Activated CD4-positive, alpha-beta memory T cell treated with anti-CD3 and anti-CD28 coated beads for 36 hours (primary cell): ENCODE measurements at regions of chr7 and their contacts with region 1.

Region 1: DNA sequence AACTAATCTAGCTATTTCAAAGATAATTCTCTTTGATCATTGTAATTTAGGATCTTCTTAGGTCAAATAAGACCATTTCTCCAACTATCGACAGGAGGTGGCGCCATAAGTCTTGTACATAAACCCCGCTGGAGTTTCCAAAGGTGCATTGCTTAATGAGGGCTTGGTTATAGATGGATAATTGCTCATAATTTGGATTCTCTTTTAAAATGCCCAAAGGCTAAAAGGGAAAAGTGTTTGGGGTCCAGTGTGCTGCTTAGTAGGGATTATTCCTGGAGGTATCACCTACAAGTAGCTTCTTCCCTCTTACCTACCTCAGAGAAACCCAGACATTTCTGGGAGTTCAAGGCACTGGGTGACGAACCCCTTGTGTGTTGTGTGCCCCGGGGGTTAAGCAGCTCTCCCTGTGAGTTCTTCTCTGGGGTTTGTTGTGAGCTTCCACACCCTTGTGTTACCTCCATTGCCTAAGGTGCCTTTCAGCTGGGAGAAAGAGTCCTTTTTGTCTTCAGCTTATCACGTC is 75.2 kb downstream of the PAXIP1 start:
- DNase-seq: peak; percentile 83
- H3K4me3 Mint-ChIP-seq: peak overlapping the region; percentile 95
- H3K27ac Mint-ChIP-seq: peak overlapping the region; percentile 94
- H3K4me1 Mint-ChIP-seq: peaks cover 24% of the 10 kb centered on the region
- H3K27me3 Mint-ChIP-seq: no peaks in the 10 kb centered on the region

Region 2: GRCh38 chr7:154947604-154948003 is 19.9 kb after region 1 on chr7:
- CTCF ChIA-PET with region 1: interaction called, 70 read pairs
- POLR2A ChIA-PET with region 1: no interaction called
- intact Hi-C with region 1: no loop called
- DNase-seq: no peak
- H3K4me3 Mint-ChIP-seq: no peak overlapping the region
- H3K27ac Mint-ChIP-seq: no peak overlapping the region
- H3K4me1 Mint-ChIP-seq: no peaks in the 10 kb centered on the region
- H3K27me3 Mint-ChIP-seq: no peaks in the 10 kb centered on the region

Region 3: DNA sequence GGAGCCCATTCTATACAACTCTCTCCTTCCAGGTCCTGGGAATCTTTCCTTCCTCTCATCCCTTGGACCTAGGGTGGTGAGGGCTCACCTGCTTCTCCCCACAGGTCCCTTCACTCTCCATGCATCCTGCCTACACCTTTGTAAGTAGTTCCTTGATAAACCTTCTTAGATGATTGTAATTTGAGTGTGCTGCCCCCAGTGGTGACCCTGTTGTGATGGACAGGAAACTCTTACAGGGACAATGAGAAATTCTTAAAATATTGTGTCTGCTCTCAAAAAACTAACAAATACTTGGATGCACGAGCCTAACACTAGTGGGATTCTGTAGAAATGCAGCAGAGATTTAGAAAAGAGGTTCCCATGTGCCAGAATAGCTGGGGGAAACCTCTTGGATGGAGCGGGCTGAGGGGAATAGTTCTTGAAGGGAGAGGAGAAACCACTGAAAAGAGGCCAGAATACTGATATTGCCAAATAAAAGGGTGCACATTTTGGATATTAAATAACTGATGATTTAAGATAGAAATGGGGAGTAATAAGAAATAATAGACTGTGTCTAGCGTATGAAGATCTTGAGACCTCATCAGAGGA is 82.0 kb after region 1 on chr7:
- CTCF ChIA-PET with region 1: interaction called, 17 read pairs
- POLR2A ChIA-PET with region 1: no interaction called
- intact Hi-C with region 1: loop called (anchors 1 kb)
- DNase-seq: peak; percentile 38
- H3K4me3 Mint-ChIP-seq: no peak overlapping the region
- H3K27ac Mint-ChIP-seq: no peak overlapping the region
- H3K4me1 Mint-ChIP-seq: peaks cover 4% of the 10 kb centered on the region
- H3K27me3 Mint-ChIP-seq: no peaks in the 10 kb centered on the region

Region 4: GRCh38 chr7:155298834-155299534 is 371.3 kb after region 1 on chr7:
- CTCF ChIA-PET with region 1: interaction called, 5 read pairs
- POLR2A ChIA-PET with region 1: interaction called, 3 read pairs
- intact Hi-C with region 1: loop called (anchors 1 kb)
- DNase-seq: peak; percentile 98
- H3K4me3 Mint-ChIP-seq: peak overlapping the region; percentile 93
- H3K27ac Mint-ChIP-seq: peak overlapping the region; percentile 96
- H3K4me1 Mint-ChIP-seq: peaks cover 38% of the 10 kb centered on the region
- H3K27me3 Mint-ChIP-seq: no peaks in the 10 kb centered on the region

Region 5: DNA sequence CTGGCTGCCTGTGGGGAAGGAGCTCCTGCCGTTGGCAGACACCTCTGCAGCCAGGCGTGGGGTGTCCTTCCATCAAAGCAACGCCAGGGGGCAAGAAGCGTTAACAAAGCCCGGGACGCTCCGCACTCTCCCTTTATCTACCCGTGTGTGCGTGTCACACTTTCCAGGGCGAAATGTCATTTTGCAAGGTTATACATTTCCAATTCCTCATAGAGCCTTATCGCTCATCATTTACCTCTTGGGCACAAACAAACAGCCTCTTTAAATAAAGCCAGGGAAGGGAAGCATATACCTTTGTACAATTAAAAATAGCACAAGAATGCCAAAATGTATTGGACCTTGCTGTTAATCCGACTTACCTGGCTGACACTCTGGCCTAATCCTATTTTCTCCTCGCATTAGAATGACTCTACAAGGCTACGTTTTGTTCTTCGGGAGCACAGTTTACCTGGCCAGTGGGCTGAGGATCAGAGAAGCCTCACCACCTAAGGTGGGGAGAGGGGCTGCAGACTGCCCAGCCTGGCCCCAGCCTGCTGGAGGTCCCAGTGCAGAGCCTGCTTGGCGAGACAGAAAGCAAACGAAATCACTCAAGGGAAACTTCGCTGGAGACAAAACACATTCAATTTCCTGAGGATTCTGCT is 452.7 kb after region 1 on chr7:
- CTCF ChIA-PET with region 1: interaction called, 21 read pairs
- POLR2A ChIA-PET with region 1: no interaction called
- intact Hi-C with region 1: no loop called
- DNase-seq: peak; percentile 82
- H3K4me3 Mint-ChIP-seq: no peak overlapping the region
- H3K27ac Mint-ChIP-seq: no peak overlapping the region
- H3K4me1 Mint-ChIP-seq: peaks cover 22% of the 10 kb centered on the region
- H3K27me3 Mint-ChIP-seq: peaks cover 88% of the 10 kb centered on the region

Region 6: DNA sequence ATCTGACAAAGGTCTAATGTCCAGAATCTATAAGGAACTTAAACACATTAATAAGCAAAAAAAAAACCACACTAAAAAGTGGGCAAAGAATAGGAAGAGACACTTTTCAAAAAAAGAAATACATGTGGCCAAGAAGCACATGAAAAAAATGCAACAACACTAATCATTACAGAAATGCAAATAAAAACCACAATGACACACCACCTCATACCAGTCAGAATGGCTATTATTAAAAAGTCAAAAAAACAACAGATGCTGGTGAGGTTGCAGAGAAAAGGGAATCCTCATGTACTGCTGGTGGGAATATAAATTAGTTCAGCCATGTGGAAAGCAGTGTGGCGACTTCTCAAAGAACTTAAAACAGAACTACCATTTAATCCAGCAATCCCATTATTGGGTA is 1846.3 kb after region 1 on chr7:
- CTCF ChIA-PET with region 1: no interaction called
- POLR2A ChIA-PET with region 1: no interaction called
- intact Hi-C with region 1: loop called (anchors 5 kb)
- DNase-seq: no peak
- H3K4me3 Mint-ChIP-seq: no peak overlapping the region
- H3K27ac Mint-ChIP-seq: peak overlapping the region; percentile 9
- H3K4me1 Mint-ChIP-seq: peaks cover 58% of the 10 kb centered on the region
- H3K27me3 Mint-ChIP-seq: no peaks in the 10 kb centered on the region